OCI-LY7 (cell line): ENCODE measurements at regions of chr11 and their contacts with region 1.

Region 1: DNA sequence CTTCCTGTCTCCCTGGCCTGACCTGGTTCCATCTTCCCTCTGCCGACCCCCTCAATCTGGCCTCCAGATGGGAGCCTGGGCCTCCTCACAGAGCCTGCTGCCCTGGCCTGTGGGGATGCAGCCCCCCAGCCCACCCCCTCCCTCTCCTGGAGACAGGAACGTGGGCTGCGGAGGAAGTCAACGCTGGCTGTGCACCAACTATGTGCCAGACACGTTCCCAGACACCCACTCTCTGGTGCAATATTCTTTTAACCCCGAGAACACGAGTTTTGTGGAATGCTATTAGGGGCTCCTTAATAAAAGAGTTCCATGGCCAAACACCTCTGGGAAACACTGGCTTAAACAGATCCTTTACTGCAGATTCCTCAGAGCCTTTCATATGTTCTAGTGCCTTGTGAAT is 15.9 kb downstream of the WNT11 start:
- DNase-seq: no peak
- H3K4me3 ChIP-seq: no peak overlapping the region
- H3K27ac ChIP-seq: no peak overlapping the region
- H3K4me1 ChIP-seq: no peaks in the 10 kb centered on the region
- CTCF ChIP-seq: no peak

Region 2: DNA sequence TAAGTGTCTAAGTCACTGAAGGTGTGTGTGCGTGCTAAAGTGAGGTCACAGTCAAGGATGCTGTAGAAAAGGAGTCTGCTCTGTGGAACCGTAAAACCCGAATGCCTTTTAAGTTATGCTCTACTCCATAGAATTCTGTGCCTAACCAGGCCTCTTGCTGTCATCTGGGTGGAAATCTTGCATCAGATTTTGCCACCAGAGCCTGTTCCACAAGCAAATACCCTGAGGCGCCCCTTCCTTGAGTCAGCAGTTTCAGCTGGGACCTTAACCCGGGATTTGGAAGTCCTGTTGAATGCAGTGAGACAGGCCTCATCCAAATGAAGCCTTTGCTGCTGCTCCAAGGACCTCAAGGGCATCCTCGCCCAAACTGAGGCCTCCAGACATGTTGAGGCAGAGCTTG is 93.8 kb before region 1 on chr11:
- CTCF ChIA-PET with region 1: no interaction called
- POLR2A ChIA-PET with region 1: no interaction called
- intact Hi-C with region 1: no loop called
- DNase-seq: no peak
- H3K4me3 ChIP-seq: no peak overlapping the region
- H3K27ac ChIP-seq: no peak overlapping the region
- H3K4me1 ChIP-seq: no peaks in the 10 kb centered on the region
- CTCF ChIP-seq: no peak

Region 3: DNA sequence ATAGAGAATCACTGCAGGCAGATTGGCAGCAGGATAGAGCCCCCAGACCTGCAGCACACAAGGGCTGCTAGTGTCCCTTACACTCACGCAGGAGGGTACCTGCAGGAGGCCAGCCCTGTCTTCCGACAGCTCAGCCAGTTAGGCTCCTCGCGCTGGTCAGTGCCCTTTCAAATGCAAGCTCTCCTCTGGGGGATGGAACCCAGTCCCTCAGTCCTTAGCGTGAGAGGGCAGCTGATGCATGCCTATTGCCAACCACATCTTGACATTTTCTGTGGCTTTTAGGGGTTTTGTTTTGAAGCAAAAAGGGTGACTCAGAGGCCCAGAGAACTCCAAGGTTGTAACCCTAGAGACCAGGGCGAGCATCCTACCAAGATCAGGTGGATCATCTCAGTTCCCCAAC is 24.1 kb before region 1 on chr11:
- CTCF ChIA-PET with region 1: no interaction called
- POLR2A ChIA-PET with region 1: no interaction called
- intact Hi-C with region 1: no loop called
- DNase-seq: no peak
- H3K4me3 ChIP-seq: no peak overlapping the region
- H3K27ac ChIP-seq: no peak overlapping the region
- H3K4me1 ChIP-seq: no peaks in the 10 kb centered on the region
- CTCF ChIP-seq: no peak

Region 4: DNA sequence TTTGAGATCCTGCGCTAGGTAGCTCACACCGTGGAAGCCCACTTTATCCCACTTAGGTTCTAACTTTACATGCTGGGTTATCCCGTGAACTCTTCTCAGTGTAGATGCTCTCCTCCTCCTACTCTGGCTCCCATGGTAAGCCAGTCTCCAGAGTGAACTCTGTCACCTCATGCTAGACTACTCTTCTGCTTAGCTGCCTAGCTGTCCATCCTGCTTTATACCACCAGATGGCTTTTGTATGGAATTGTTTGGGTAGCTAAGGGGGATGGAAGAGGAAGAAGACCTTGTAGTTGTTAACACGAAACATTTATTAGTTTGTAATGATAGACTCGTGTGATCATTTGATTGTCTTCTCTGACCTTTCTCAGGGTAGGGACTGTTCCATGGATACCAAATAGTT is 301.3 kb after region 1 on chr11:
- CTCF ChIA-PET with region 1: no interaction called
- POLR2A ChIA-PET with region 1: no interaction called
- intact Hi-C with region 1: loop called (anchors 5 kb)
- DNase-seq: no peak
- H3K4me3 ChIP-seq: no peak overlapping the region
- H3K27ac ChIP-seq: no peak overlapping the region
- H3K4me1 ChIP-seq: no peaks in the 10 kb centered on the region
- CTCF ChIP-seq: no peak